MCF 10A (cell line): ENCODE measurements at regions of chr1 and their contacts with region 1.

Region 1: DNA sequence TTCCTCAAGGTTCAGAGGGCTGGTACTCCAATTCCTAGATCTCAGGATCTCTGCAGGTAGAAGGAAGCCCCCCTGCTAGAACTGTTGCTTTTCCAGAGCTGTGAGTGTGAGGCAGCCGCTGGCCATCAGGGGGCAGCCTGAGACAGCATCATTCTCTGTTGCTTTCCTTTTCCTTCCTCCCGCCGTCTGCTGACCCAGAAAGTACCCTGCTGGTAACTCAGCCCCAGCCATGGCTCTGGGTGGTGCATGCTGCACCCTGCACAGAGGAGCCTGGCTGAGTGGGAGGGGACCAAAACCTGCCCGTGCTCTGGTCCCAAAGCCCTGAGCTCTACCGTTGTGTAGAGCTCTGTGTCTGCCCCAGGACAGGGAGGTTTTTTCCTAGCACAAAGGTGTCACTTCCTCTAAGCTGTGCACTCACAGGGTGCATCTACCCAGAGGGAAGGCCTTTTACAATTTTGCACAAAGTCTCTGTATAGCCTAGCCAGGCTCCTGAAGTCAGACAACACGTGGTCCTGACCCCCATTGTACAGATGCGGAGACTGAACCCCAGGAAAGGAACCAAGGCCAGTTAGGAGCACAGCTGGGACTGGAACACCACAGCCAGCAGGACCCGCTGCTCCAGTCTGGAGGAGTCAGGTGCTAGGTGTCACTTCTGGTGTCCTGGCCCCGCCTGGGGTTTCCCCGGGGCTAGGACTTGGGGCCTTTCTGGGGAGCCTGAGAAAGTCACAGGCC is 5.6 kb upstream of the FAM131C start:
- DNase-seq: peak; percentile 77
- H3K4me3 Mint-ChIP-seq: no peak overlapping the region
- H3K27ac Mint-ChIP-seq: no peak overlapping the region
- H3K4me1 Mint-ChIP-seq: peaks cover 39% of the 10 kb centered on the region
- H3K27me3 Mint-ChIP-seq: no peaks in the 10 kb centered on the region
- CTCF ChIP-seq: peak; percentile 93

Region 2: DNA sequence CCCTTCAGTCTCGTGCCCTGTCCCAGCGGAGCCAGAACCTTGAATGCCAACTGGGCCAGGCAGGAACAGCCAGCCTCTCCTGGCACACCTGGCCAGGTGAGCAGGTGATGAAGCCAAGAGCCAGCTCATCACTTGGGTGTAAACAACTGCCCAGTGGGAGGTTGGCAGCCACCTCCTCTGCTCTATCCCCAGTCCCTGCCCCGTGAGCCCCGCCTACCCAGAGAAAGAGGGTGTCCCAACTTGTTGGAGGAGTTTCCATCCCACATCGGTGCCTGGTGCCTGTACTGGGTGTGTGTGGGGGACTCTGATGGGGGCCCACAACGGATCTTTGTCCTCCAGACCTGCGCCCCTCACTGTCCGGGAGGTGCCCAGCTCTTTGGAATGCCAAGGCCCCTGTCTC is 12.2 kb after region 1 on chr1:
- CTCF ChIA-PET with region 1: interaction called, 23 read pairs
- POLR2A ChIA-PET with region 1: interaction called, 3 read pairs
- intact Hi-C with region 1: no loop called
- DNase-seq: peak; percentile 82
- H3K4me3 Mint-ChIP-seq: no peak overlapping the region
- H3K27ac Mint-ChIP-seq: no peak overlapping the region
- H3K4me1 Mint-ChIP-seq: peaks cover 6% of the 10 kb centered on the region
- H3K27me3 Mint-ChIP-seq: peaks cover 18% of the 10 kb centered on the region
- CTCF ChIP-seq: no peak

Region 3: GRCh38 chr1:16111771-16112595 is 32.9 kb after region 1 on chr1:
- CTCF ChIA-PET with region 1: interaction called, 10 read pairs
- POLR2A ChIA-PET with region 1: no interaction called
- intact Hi-C with region 1: no loop called
- DNase-seq: no peak
- H3K4me3 Mint-ChIP-seq: no peak overlapping the region
- H3K27ac Mint-ChIP-seq: no peak overlapping the region
- H3K4me1 Mint-ChIP-seq: no peaks in the 10 kb centered on the region
- H3K27me3 Mint-ChIP-seq: no peaks in the 10 kb centered on the region
- CTCF ChIP-seq: no peak

Region 4: GRCh38 chr1:16139473-16139962 is 60.4 kb after region 1 on chr1:
- CTCF ChIA-PET with region 1: interaction called, 156 read pairs
- POLR2A ChIA-PET with region 1: interaction called, 8 read pairs
- intact Hi-C with region 1: no loop called
- DNase-seq: peak; percentile 94
- H3K4me3 Mint-ChIP-seq: peak overlapping the region; percentile 26
- H3K27ac Mint-ChIP-seq: peak overlapping the region; percentile 63
- H3K4me1 Mint-ChIP-seq: peaks cover 53% of the 10 kb centered on the region
- H3K27me3 Mint-ChIP-seq: no peaks in the 10 kb centered on the region
- CTCF ChIP-seq: no peak

Region 5: GRCh38 chr1:16155532-16156410 is 76.7 kb after region 1 on chr1 and contains the start of gene EPHA2:
- CTCF ChIA-PET with region 1: interaction called, 156 read pairs
- POLR2A ChIA-PET with region 1: interaction called, 9 read pairs
- intact Hi-C with region 1: loop called (anchors 1 kb)
- DNase-seq: peak; percentile 96
- H3K4me3 Mint-ChIP-seq: peak within 1 kb of the TSS; percentile 87
- H3K27ac Mint-ChIP-seq: peak within 1 kb of the TSS; percentile 63
- H3K4me1 Mint-ChIP-seq: peaks cover 42% of the 10 kb centered on the region
- H3K27me3 Mint-ChIP-seq: no peaks in the 10 kb centered on the region
- CTCF ChIP-seq: no peak
- total RNA-seq, gene EPHA2: 206 and 248 TPM in 2 replicates

Region 6: DNA sequence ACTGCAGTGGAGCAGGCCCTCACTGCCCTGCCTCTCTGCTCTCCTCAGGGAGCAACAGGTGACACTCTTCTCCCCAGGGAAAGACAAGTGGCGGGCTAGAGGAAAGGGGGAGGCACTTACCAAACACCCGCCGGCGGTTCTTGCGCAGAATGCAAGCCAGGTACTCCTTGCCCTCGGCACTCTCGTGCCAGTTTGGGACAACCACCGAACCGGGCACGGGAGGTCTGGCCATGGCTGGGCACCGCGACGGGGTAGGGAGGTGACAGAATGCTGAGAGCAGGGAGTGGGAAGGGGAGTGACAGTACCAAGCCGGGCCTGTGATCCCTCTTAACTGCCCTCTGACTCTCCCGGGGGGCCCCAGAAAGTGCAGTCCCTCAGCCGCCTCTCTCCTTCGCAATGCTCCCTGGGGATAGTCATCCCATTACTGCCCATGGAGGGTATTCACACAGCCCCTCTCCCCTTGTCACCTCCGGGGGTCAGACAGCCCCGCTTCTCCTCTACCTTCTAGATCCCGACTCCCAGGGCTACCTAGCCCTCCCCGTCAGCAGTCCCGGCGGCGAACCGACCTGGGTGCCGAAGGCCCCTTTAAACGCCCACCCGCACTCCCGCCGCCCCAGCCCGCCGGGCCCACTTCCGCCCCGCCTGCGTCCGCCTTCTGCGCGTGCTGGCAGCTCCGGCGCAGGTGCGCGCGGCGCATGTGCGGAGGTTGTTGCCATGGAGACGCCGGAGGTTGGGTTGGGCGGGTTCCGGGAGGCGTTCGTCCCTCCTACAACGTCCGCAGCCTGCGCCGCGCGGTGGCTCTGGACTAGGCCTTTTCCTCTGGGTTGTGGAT is 157.6 kb after region 1 on chr1 and contains the start of gene CPLANE2:
- CTCF ChIA-PET with region 1: interaction called, 79 read pairs
- POLR2A ChIA-PET with region 1: interaction called, 17 read pairs
- intact Hi-C with region 1: no loop called
- DNase-seq: peak; percentile 89
- H3K4me3 Mint-ChIP-seq: peak within 1 kb of the TSS; percentile 82
- H3K27ac Mint-ChIP-seq: peak within 1 kb of the TSS; percentile 87
- H3K4me1 Mint-ChIP-seq: peaks cover 11% of the 10 kb centered on the region
- H3K27me3 Mint-ChIP-seq: no peaks in the 10 kb centered on the region
- CTCF ChIP-seq: no peak
- total RNA-seq, gene CPLANE2: 8.3 and 13.2 TPM in 2 replicates

Region 7: GRCh38 chr1:16366722-16367257 is 287.7 kb after region 1 on chr1 and contains the start of gene SZRD1:
- CTCF ChIA-PET with region 1: interaction called, 74 read pairs
- POLR2A ChIA-PET with region 1: interaction called, 7 read pairs
- intact Hi-C with region 1: loop called (anchors 1 kb)
- DNase-seq: peak; percentile 99
- H3K4me3 Mint-ChIP-seq: peak within 1 kb of the TSS; percentile 74
- H3K27ac Mint-ChIP-seq: peak within 1 kb of the TSS; percentile 98
- H3K4me1 Mint-ChIP-seq: peaks cover 13% of the 10 kb centered on the region
- H3K27me3 Mint-ChIP-seq: no peaks in the 10 kb centered on the region
- CTCF ChIP-seq: no peak
- total RNA-seq, gene SZRD1: 108 and 114 TPM in 2 replicates